Heart left ventricle (tissue), 16 donors: ENCODE measurements at regions of chr7 and their contacts with region 1.

Region 1: GRCh38 chr7:26127411-26127810 is 24.6 kb upstream of the NFE2L3 start:
- DNase-seq: no peak
- ATAC-seq: no peak
- H3K4me3 ChIP-seq: no peak overlapping the region
- H3K27ac ChIP-seq: no peak overlapping the region
- H3K4me1 ChIP-seq: no peaks in the 10 kb centered on the region
- H3K27me3 ChIP-seq: peaks cover 0 to 17% (median 0%) of the 10 kb centered on the region in 9 donors
- CTCF ChIP-seq: no peak
- POLR2A ChIP-seq: no peak

Region 2: DNA sequence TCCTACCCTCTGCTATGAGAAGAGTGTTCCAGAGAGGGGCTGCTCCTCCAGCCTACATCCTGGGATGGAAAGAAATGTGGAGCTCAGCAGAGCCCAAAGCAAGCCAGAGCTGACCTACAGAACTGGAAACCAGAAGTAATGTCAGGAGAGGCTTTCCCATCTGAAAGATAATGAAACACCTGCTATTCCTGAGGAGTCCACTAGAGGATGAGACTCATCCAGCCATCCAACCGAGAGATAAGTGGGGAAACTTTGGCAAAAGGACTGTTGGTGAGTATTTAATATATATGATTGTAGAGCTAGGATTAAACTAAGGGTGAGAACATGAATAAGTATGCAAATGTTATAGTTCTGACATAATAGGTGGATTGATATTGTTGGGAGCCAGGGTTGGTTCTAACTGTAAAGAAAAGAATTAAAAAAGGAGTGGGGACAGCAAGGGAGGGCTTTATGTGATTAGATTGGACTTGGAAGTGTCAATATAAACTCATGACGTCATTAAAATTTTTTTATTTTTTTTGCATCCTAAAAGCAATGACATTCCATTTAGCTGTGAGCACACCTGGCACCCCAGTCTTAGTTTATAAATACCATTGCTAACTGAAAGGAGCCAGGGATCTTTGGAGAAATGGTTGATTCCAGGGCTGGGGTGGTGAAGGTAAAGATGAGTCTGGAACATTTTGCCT is 288.2 kb before region 1 on chr7:
- intact Hi-C with region 1: no loop called
- DNase-seq: no peak
- ATAC-seq: no peak
- H3K4me3 ChIP-seq: no peak overlapping the region
- H3K27ac ChIP-seq: peak overlapping the region in 5 of 12 donors; percentile 0 to 82 (median 72)
- H3K4me1 ChIP-seq: peaks cover 3 to 41% (median 19%) of the 10 kb centered on the region in 12 donors
- H3K27me3 ChIP-seq: no peaks in the 10 kb centered on the region
- CTCF ChIP-seq: peak in 2 of 12 donors; percentile 6 to 11
- POLR2A ChIP-seq: no peak

Region 3: DNA sequence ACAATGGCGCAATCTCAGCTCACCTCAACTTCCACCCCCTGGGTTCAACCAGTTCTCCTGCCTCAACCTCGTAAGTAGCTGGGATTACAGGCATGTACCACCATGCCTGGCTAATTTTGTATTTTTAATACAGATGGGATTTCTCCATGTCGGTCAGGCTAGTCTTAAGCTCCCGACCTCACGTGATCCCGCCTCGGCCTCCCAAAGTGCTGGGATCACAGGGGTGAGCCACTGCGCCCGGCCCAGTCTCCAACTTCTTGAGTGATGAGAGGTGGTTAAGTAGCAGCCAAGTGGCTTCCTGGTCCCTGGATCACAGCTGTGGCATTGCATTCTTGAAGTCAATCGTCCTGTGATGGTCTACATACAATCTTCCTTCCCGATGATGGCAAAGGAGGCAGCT is 21.5 kb before region 1 on chr7:
- intact Hi-C with region 1: loop called in 1 of 10 experiments (anchors 2 kb)
- DNase-seq: no peak
- ATAC-seq: no peak
- H3K4me3 ChIP-seq: no peak overlapping the region
- H3K27ac ChIP-seq: no peak overlapping the region
- H3K4me1 ChIP-seq: no peaks in the 10 kb centered on the region
- H3K27me3 ChIP-seq: peaks cover 0 to 14% (median 0%) of the 10 kb centered on the region in 9 donors
- CTCF ChIP-seq: no peak
- POLR2A ChIP-seq: no peak